ENCODE measurements at regions of chr1 and their contacts with region 1.

Region 1: DNA sequence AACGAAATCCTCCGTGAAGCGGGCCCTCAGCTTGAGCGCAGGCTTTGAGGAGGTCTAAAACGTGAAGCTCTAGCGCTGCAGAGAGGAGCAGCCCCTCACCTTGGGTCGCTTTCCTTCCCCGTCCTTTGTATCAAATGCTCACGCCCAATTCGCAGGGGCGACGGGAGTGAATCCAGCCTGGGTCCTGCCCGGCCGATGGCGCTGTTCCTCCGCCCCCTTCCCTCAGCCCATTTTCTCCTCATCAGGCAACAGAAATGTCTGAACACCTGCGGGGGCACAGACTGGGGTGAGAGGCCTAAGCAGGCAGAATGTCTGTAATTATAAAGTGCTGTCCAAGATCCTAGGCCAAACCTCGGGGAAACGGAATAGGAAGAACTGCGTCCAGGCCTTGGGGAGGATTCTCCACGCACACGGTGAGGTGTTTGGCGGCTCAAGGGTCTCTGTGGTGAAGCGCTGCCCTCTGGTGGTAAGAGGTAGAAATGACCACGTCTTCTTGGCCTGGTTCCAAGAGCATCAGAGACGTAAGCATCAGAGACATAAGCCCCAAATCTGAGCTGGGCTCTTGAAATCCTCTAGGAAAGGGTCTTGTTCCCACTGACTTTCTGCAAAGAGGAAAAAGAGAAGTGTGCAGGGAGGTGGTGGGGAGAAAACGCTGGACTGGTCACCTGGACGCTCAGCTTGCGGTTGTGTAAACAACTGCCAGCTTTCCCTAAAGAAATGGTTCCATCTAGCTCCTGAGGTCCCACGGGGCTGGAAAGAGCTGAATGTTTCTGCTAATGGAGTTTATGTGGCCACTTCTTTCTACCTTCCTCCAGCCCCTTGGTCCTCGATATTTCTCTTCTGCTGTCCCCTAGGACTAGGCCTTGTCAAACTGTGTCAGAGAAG is 92.1 kb upstream of the CD53 start:
- DNase-seq: peak; percentile 84
- H3K4me3 Mint-ChIP-seq: no peak overlapping the region
- H3K27ac Mint-ChIP-seq: no peak overlapping the region
- H3K4me1 Mint-ChIP-seq: peaks cover 39% of the 10 kb centered on the region
- H3K27me3 Mint-ChIP-seq: peaks cover 6% of the 10 kb centered on the region

Region 2: GRCh38 chr1:110605901-110606656 is 174.8 kb before region 1 on chr1 and contains the start of gene KCNA2:
- CTCF ChIA-PET with region 1: interaction called, 10 read pairs
- POLR2A ChIA-PET with region 1: no interaction called
- DNase-seq: no peak
- H3K4me3 Mint-ChIP-seq: peak within 1 kb of the TSS; percentile 67
- H3K27ac Mint-ChIP-seq: peak within 1 kb of the TSS; percentile 46
- H3K4me1 Mint-ChIP-seq: peaks cover 29% of the 10 kb centered on the region
- H3K27me3 Mint-ChIP-seq: peaks cover 50% of the 10 kb centered on the region
- total RNA-seq, gene KCNA2: 3.5 to 3.9 TPM